IMR-90 (cell line): ENCODE measurements at regions of chr7 and their contacts with region 1.

Region 1: DNA sequence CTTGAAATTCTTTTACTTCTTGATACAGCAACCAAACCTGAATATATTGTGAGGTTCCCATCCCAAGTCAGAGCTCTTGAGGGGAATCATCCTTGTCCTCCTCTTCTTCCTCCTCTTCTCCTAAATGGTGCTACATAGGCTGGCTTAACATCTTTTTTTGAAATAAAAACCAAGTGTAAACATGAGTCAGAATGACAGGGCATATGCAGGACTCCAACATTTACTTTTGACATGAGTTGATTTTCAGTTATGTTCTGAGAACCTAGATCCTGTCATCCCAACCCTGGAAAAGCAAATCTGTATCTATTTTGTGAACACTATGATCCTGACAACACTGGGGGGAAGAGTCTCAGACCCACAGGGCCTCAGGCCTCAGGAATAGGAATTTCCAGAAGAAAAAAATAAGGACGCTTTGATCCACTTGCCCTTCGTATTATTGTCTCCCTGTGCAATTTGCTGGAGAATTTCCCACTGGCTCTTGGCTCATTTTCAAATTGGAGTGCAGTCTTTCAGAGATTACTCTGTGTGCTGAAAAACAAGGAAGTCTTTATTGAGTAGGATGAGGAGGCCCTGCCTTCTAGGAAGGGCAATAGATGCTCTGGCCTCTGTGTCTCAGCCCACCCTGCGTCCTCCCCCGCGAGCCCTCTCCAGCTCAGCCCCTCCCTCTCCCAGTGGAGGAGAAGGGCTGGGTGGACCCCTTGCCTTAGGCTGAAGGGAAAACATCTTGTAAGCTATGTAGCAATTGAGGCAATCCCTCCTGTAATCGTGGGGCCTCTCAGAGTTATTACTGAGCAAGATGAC is 121.6 kb downstream of the CREB5 start:
- DNase-seq: peak; percentile 78
- ATAC-seq: peak; percentile 56
- H3K4me3 ChIP-seq: no peak overlapping the region
- H3K27ac ChIP-seq: 0 out of 2 replicates have a peak overlapping the region, but pooled peaks have one; percentile 21
- H3K4me1 ChIP-seq: peaks cover 9% of the 10 kb centered on the region
- H3K27me3 ChIP-seq: no peaks in the 10 kb centered on the region
- CTCF ChIP-seq: no peak
- POLR2A ChIP-seq: no peak
- RAD21 ChIP-seq: no peak

Region 2: GRCh38 chr7:28245123-28245878 is 288.6 kb before region 1 on chr7:
- CTCF ChIA-PET with region 1: no interaction called
- POLR2A ChIA-PET with region 1: no interaction called
- dilution Hi-C with region 1: no loop called
- in situ Hi-C with region 1: no loop called
- intact Hi-C with region 1: no loop called
- DNase-seq: no peak
- ATAC-seq: no peak
- H3K4me3 ChIP-seq: no peak overlapping the region
- H3K27ac ChIP-seq: no peak overlapping the region
- H3K4me1 ChIP-seq: peaks cover 2% of the 10 kb centered on the region; the same call in 1 of the 2 replicates
- H3K27me3 ChIP-seq: no peaks in the 10 kb centered on the region; the same call in 1 of the 2 replicates
- CTCF ChIP-seq: no peak
- POLR2A ChIP-seq: no peak
- RAD21 ChIP-seq: no peak

Region 3: DNA sequence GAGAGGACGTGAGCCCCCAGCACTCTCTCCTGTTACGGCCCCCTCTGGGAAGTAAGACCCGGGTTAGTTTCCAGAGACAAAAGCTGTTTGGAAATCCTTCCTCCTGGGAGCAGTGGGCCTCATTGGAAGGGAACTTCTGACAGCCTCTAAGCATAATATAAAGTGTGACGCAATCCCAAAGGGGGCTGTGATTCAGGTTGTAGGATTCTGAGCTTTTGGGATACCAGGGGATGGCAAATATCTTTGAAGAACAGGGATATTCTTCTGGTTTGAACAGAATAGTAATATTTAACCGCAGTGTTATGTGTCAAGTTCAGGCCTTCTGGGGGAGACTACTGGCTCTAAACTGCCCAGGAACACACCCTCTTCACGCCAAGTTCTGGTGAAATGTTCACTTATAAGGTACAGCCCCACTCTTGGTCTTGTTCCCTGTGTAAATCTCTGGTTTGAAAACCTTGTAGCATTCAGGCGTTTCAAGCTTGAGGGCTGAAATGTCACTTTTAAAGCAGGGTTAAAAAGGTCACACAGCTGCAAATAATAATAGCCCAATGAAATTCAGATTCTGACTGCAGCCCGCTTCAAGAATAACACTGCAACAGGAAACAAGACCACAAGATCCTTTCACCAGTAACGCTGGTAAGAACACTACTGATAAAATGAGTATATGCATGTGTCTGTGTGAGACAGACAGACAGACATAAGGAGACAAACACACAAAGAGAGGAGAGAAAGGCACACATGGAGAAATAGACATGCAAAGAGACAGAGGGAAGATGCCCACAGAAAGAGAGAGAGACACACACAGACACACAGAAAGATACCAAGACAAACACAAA is 52.6 kb before region 1 on chr7:
- CTCF ChIA-PET with region 1: no interaction called
- POLR2A ChIA-PET with region 1: no interaction called
- dilution Hi-C with region 1: no loop called
- in situ Hi-C with region 1: no loop called
- intact Hi-C with region 1: loop called (anchors 5 kb)
- DNase-seq: peak; percentile 65
- ATAC-seq: peak; percentile 64
- H3K4me3 ChIP-seq: no peak overlapping the region
- H3K27ac ChIP-seq: peak overlapping the region; percentile 7; the same call in 1 of the 2 replicates
- H3K4me1 ChIP-seq: peaks cover 6% of the 10 kb centered on the region
- H3K27me3 ChIP-seq: no peaks in the 10 kb centered on the region
- CTCF ChIP-seq: no peak
- POLR2A ChIP-seq: no peak
- RAD21 ChIP-seq: no peak

Region 4: GRCh38 chr7:28551331-28551730 is 17.4 kb after region 1 on chr7:
- CTCF ChIA-PET with region 1: no interaction called
- POLR2A ChIA-PET with region 1: no interaction called
- dilution Hi-C with region 1: no loop called
- in situ Hi-C with region 1: no loop called
- intact Hi-C with region 1: no loop called
- DNase-seq: peak; percentile 52
- ATAC-seq: peak; percentile 77
- H3K4me3 ChIP-seq: no peak overlapping the region
- H3K27ac ChIP-seq: no peak overlapping the region
- H3K4me1 ChIP-seq: peaks cover 2% of the 10 kb centered on the region; the same call in 1 of the 2 replicates
- H3K27me3 ChIP-seq: 0 out of 2 replicates have a peak, but pooled peaks cover 1% of the 10 kb centered on the region
- CTCF ChIP-seq: no peak
- POLR2A ChIP-seq: no peak
- RAD21 ChIP-seq: no peak

Region 5: GRCh38 chr7:28573059-28573553 is 39.2 kb after region 1 on chr7:
- CTCF ChIA-PET with region 1: no interaction called
- POLR2A ChIA-PET with region 1: no interaction called
- dilution Hi-C with region 1: no loop called
- in situ Hi-C with region 1: no loop called
- intact Hi-C with region 1: no loop called
- DNase-seq: peak; percentile 47
- ATAC-seq: no peak
- H3K4me3 ChIP-seq: no peak overlapping the region
- H3K27ac ChIP-seq: no peak overlapping the region
- H3K4me1 ChIP-seq: peaks cover 3% of the 10 kb centered on the region; the same call in 1 of the 2 replicates
- H3K27me3 ChIP-seq: no peaks in the 10 kb centered on the region
- CTCF ChIP-seq: no peak
- POLR2A ChIP-seq: no peak
- RAD21 ChIP-seq: no peak

Region 6: DNA sequence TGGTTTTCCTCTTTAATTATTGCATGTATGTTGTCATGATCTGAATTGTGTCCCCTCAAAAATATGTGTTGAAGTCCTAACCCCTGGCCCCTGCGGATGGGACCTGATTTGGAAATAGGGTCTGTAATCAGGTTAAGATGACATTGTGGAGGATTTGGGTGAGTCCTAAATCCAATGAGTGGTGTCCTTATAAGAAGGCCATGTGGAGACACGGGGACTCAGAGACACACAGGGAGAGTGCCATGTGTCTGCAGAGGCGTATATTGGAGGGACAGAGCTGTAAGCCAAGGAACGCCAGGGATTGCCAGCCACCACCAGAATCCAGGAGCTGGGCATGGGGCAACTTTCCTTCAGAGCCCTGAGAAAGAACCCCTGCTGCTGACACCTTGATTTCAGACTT is 50.3 kb after region 1 on chr7:
- CTCF ChIA-PET with region 1: no interaction called
- POLR2A ChIA-PET with region 1: no interaction called
- dilution Hi-C with region 1: no loop called
- in situ Hi-C with region 1: no loop called
- intact Hi-C with region 1: no loop called
- DNase-seq: no peak
- ATAC-seq: no peak
- H3K4me3 ChIP-seq: no peak overlapping the region
- H3K27ac ChIP-seq: no peak overlapping the region
- H3K4me1 ChIP-seq: no peaks in the 10 kb centered on the region
- H3K27me3 ChIP-seq: no peaks in the 10 kb centered on the region; the same call in 1 of the 2 replicates
- CTCF ChIP-seq: no peak
- POLR2A ChIP-seq: no peak
- RAD21 ChIP-seq: no peak